Natural killer cell (primary cell): ENCODE measurements at regions of chr5 and their contacts with region 1.

Region 1: GRCh38 chr5:163437309-163438182 is at the start of gene CCNG1:
- DNase-seq: peak; percentile 82 to 95
- ATAC-seq: peak; percentile 92 to 98 (median 96)
- H3K4me3 ChIP-seq: peak within 1 kb of the TSS; percentile 89
- H3K4me3 Mint-ChIP-seq: peak within 1 kb of the TSS; percentile 89
- H3K27ac ChIP-seq: peak within 1 kb of the TSS; percentile 77
- H3K27ac Mint-ChIP-seq: peak within 1 kb of the TSS; percentile 86 to 91
- H3K4me1 ChIP-seq: peaks cover 16% of the 10 kb centered on the region
- H3K4me1 Mint-ChIP-seq: peaks cover 34 to 40% of the 10 kb centered on the region in 2 donors
- H3K27me3 ChIP-seq: no peaks in the 10 kb centered on the region
- H3K27me3 Mint-ChIP-seq: peaks cover 5 to 6% of the 10 kb centered on the region in 2 donors
- CTCF ChIP-seq: no peak
- total RNA-seq, gene CCNG1: 71.7 to 100 (median 78.7) TPM

Region 2: GRCh38 chr5:163362840-163363788 is 74.4 kb before region 1 on chr5:
- intact Hi-C with region 1: no loop called
- DNase-seq: no peak
- ATAC-seq: peak in 1 of 3 donors; percentile 35
- H3K4me3 ChIP-seq: no peak overlapping the region
- H3K4me3 Mint-ChIP-seq: no peak overlapping the region
- H3K27ac ChIP-seq: no peak overlapping the region
- H3K27ac Mint-ChIP-seq: no peak overlapping the region
- H3K4me1 ChIP-seq: no peaks in the 10 kb centered on the region
- H3K4me1 Mint-ChIP-seq: no peaks in the 10 kb centered on the region
- H3K27me3 ChIP-seq: no peaks in the 10 kb centered on the region
- H3K27me3 Mint-ChIP-seq: peaks cover 6 to 13% of the 10 kb centered on the region in 2 donors
- CTCF ChIP-seq: no peak

Region 3: GRCh38 chr5:163459922-163460766 is 22.6 kb after region 1 on chr5 and contains the starts of genes HMMR and NUDCD2:
- intact Hi-C with region 1: loop called (anchors 1 kb)
- DNase-seq: peak; percentile 97 to 98
- ATAC-seq: peak; percentile 76 to 90 (median 82)
- H3K4me3 ChIP-seq: peak within 1 kb of the TSS; percentile 86
- H3K4me3 Mint-ChIP-seq: peak within 1 kb of the TSS; percentile 98
- H3K27ac ChIP-seq: peak within 1 kb of the TSS; percentile 95
- H3K27ac Mint-ChIP-seq: peak within 1 kb of the TSS; percentile 98
- H3K4me1 ChIP-seq: peaks cover 20% of the 10 kb centered on the region
- H3K4me1 Mint-ChIP-seq: peaks cover 28 to 40% of the 10 kb centered on the region in 2 donors
- H3K27me3 ChIP-seq: no peaks in the 10 kb centered on the region
- H3K27me3 Mint-ChIP-seq: no peaks in the 10 kb centered on the region
- CTCF ChIP-seq: no peak
- total RNA-seq, gene HMMR: 0.42 to 0.70 (median 0.63) TPM
- total RNA-seq, gene NUDCD2: 13.2 to 24.7 (median 21.7) TPM

Region 4: DNA sequence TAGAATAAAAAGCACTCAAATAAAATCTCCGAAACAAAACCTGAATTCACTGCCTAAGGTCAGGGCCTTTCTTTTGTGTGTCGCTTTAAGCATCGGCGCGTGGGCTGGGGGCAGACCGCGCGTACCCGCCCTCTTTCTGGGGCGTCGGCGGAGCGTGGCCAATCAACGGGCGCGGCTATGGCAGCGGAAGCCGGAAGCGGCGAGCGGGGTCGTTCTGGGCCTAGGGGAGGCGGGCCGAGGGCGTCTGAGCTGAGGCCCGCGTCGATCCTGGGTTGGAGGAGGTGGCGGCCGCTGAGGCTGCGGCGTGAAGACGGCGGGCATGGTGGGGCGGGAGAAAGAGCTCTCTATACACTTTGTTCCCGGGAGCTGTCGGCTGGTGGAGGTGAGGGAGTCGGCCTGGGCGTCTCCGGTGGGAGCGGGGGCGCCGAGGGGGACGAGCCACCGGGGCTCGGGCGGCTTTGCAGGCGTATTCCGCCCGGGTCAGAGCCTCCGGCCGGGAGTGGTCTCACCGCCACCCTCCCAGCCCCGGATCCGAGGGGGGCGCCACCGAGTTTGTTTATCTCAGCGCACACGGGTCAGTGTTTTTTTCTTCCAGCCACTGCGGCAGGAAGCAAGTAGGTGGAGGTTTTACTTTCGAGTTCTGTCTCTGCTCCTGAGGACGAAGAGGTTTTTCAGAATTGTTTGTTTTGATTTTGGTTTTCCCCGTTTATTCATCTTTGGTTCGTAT is 68.0 kb after region 1 on chr5 and contains the start of gene MAT2B:
- intact Hi-C with region 1: loop called (anchors 1 kb)
- DNase-seq: peak; percentile 95 to 98
- ATAC-seq: peak; percentile 81 to 96 (median 87)
- H3K4me3 ChIP-seq: peak within 1 kb of the TSS; percentile 92
- H3K4me3 Mint-ChIP-seq: peak within 1 kb of the TSS; percentile 98
- H3K27ac ChIP-seq: peak within 1 kb of the TSS; percentile 99
- H3K27ac Mint-ChIP-seq: peak within 1 kb of the TSS; percentile 99 to 100
- H3K4me1 ChIP-seq: peaks cover 24% of the 10 kb centered on the region
- H3K4me1 Mint-ChIP-seq: peaks cover 70 to 74% of the 10 kb centered on the region in 2 donors
- H3K27me3 ChIP-seq: no peaks in the 10 kb centered on the region
- H3K27me3 Mint-ChIP-seq: no peaks in the 10 kb centered on the region
- CTCF ChIP-seq: peak; percentile 48
- total RNA-seq, gene MAT2B: 68.5 to 99.0 (median 80.7) TPM